ENCODE measurements at regions of chr20 and their contacts with region 1.

Region 1: DNA sequence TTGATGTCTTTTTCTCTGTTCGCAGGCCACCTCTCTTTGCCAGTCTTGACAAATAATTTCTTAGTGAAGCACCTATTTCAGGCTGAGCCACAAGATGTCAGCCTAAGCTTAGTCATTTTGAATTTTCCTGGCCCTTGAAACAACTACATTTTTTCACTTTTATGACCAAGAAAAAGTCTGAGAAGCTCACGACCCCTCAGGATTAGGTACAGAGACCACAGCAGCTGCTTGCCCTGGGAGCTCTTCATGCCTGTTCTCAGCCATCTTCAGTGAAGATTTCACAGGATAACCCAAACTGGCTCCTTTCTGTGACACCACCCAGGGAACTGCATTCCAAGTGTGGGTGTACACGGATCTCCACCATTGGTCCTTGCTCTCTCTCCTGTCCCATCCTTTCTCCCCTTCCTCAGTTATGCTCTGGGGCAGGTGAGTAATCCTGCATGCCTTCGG is 38.4 kb upstream of the SPTLC3 start:
- DNase-seq: peak; percentile 20 to 63
- ATAC-seq: peak; percentile 69 to 80
- H3K4me3 ChIP-seq: no peak overlapping the region
- H3K27ac ChIP-seq: no peak overlapping the region
- H3K4me1 ChIP-seq: peaks cover 16% of the 10 kb centered on the region
- CTCF ChIP-seq: peak; percentile 94
- EP300 ChIP-seq: no peak
- POLR2A ChIP-seq: no peak
- RAD21 ChIP-seq: peak; percentile 95 to 97

Region 2: GRCh38 chr20:12942123-12942522 is 28.3 kb before region 1 on chr20:
- CTCF ChIA-PET with region 1: interaction called, 604 read pairs
- POLR2A ChIA-PET with region 1: no interaction called
- DNase-seq: no peak
- ATAC-seq: no peak
- H3K4me3 ChIP-seq: no peak overlapping the region
- H3K27ac ChIP-seq: no peak overlapping the region
- H3K4me1 ChIP-seq: peaks cover 17% of the 10 kb centered on the region
- CTCF ChIP-seq: no peak
- EP300 ChIP-seq: no peak
- POLR2A ChIP-seq: no peak
- RAD21 ChIP-seq: no peak

Region 3: GRCh38 chr20:12984069-12984765 is 13.8 kb after region 1 on chr20:
- CTCF ChIA-PET with region 1: interaction called, 10 read pairs
- POLR2A ChIA-PET with region 1: no interaction called
- DNase-seq: no peak
- ATAC-seq: no peak
- H3K4me3 ChIP-seq: no peak overlapping the region
- H3K27ac ChIP-seq: no peak overlapping the region
- H3K4me1 ChIP-seq: no peaks in the 10 kb centered on the region
- CTCF ChIP-seq: no peak
- EP300 ChIP-seq: no peak
- POLR2A ChIP-seq: no peak
- RAD21 ChIP-seq: no peak

Region 4: DNA sequence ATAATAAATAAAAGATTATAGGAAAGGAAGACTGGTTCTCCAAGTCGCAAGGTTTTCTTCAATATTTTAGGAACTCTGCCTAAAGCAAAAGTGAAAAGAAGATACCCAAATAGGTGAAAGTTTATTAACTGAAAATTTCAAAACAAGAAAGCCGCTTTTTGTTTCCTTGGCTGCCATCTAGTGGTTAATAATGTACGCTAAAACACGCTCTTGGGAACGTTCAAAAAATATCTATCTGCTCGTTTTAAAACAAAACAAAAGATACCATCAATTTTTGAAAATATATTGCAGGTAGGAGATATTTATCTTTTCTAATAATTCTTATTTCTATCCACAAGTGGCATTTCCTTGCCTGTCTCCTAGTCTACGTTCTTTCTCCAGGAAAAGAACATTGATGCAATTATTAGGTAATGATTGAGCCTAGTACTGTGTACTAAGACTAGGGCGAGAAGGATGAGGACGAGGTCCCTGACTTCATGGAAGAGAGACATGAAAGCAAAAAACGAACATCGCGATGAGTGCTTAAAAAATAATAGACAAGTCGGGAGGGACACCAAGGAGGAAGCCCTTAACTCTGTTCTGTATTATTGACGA is 135.6 kb after region 1 on chr20:
- CTCF ChIA-PET with region 1: interaction called, 149 read pairs
- POLR2A ChIA-PET with region 1: no interaction called
- DNase-seq: peak; percentile 26 to 43
- ATAC-seq: peak in 1 of 2 experiments; percentile 72; a peak in 3 of 6 replicates
- H3K4me3 ChIP-seq: no peak overlapping the region
- H3K27ac ChIP-seq: no peak overlapping the region
- H3K4me1 ChIP-seq: no peaks in the 10 kb centered on the region
- CTCF ChIP-seq: peak; percentile 96
- EP300 ChIP-seq: no peak
- POLR2A ChIP-seq: no peak
- RAD21 ChIP-seq: peak; percentile 92 to 97

Region 5: GRCh38 chr20:13119583-13119982 is 149.2 kb after region 1 on chr20:
- CTCF ChIA-PET with region 1: interaction called, 24 read pairs
- POLR2A ChIA-PET with region 1: no interaction called
- DNase-seq: peak; percentile 29 to 70
- ATAC-seq: peak; percentile 86 to 97
- H3K4me3 ChIP-seq: no peak overlapping the region
- H3K27ac ChIP-seq: no peak overlapping the region
- H3K4me1 ChIP-seq: no peaks in the 10 kb centered on the region
- CTCF ChIP-seq: peak; percentile 94
- EP300 ChIP-seq: no peak
- POLR2A ChIP-seq: no peak
- RAD21 ChIP-seq: peak; percentile 95 to 98

Region 6: DNA sequence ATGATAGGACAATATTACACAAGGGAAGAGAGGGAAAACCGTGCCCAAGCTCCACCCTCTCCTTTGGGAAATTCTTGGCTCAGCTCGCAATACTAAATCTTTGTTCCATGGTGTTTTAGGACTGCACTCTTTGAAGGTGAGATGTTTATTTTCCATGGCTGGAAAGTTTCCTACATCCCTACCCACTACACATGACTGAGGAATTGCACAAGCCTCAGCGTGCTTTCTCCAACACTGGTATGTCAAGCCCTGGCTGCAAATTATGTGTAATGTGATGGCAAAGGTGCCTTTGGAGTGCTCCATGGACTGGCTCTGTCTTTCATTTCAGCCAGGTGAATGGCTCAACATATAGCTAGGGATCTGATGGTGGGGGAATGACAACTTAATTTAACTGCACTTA is 385.0 kb after region 1 on chr20:
- CTCF ChIA-PET with region 1: no interaction called
- POLR2A ChIA-PET with region 1: no interaction called
- DNase-seq: no peak
- ATAC-seq: no peak
- H3K4me3 ChIP-seq: no peak overlapping the region
- H3K27ac ChIP-seq: no peak overlapping the region
- H3K4me1 ChIP-seq: no peaks in the 10 kb centered on the region; the same call in 1 of the 3 replicates
- CTCF ChIP-seq: no peak
- EP300 ChIP-seq: no peak
- POLR2A ChIP-seq: no peak
- RAD21 ChIP-seq: no peak